Activated T-helper 2 cell treated with anti-CD3 and anti-CD28 coated beads, Interferon-gamma antibody, Interleukin-2, Interleukin-4, amounts not matched to agents 10 μg/mL and 5 μg/mL and 100 μg/mL, durations not matched to agents 14 hours and 24 hours and 36 hours (primary cell): ENCODE measurements at regions of chr16 and their contacts with region 1.

Region 1: DNA sequence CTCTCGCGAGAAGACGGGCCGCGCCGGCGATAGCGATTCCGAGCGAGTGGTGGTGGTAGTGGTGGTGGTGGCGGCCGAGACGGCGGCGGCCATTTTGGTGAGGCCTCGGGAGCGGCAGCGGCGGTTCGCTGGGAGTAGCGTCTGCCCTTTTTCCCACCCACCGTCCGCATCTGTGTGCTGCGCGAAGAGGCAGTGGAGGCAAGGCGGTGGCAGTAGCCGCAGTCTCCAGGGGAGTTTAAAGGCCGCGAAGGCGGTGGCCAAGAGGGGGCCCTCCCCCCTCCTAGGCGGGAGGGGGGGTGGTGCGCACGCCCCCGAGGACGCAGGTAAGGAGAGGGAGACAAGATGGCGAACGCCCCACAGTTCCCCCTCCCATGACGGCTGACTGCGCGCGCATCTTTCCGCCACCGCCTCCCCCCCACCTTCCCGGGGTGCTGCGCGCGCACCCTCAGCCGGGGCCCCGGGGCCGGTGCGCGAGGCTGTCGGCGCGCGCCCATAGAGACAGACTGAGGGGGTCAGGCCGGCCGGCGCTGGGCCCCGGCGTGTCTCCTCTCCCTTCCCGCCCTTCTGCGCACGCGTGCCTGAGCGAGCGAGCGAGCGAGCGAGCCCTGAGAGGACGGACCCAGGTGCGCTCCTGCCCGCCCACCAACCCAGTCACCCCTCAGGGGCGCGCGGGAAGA is 694 bp upstream of the SRCAP start:
- DNase-seq: peak; percentile 99
- H3K4me3 Mint-ChIP-seq: peak overlapping the region; percentile 100
- H3K27ac Mint-ChIP-seq: peak overlapping the region; percentile 100
- H3K4me1 Mint-ChIP-seq: peaks cover 29% of the 10 kb centered on the region
- H3K27me3 Mint-ChIP-seq: no peaks in the 10 kb centered on the region

Region 2: DNA sequence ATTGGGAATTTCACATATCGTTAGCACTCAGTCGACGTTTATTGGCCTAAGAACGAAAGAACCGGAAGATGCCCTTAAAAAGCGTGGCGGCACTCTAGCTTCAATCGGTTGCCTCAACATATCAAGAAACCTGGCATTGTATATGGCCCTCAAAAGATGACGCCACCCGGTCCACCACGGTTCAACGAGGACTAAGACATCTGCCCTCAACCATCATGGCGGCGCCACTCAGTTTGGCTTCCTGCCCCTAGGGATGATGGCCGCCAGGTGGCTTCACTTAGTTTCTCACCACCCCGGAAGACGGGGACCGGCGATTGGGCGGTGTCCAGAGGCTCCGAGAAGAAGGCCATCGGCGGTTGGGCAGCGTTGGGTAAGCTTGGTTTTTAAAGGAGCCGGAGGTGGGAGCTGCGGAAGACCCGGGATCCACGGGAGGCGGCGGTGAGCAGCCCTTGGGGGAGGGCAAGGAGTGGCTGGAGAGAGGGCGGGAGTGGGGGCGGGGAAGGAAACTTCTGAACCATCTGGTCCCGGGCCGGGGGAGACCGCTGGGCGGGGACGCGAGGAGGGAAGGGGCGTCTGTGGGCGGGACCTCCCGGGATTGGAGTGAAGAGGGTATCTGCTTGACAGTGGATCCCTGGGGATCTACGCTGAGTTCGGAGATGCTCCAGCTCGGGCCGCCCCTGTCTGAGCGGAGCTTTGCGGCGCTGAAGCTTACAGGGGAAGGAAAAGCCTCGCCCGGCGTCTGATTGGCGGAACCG is 47.7 kb before region 1 on chr16 and contains the start of gene PRR14:
- intact Hi-C with region 1: loop called (anchors 1 kb)
- DNase-seq: peak; percentile 99
- H3K4me3 Mint-ChIP-seq: peak within 1 kb of the TSS; percentile 98
- H3K27ac Mint-ChIP-seq: peak within 1 kb of the TSS; percentile 97
- H3K4me1 Mint-ChIP-seq: peaks cover 13% of the 10 kb centered on the region
- H3K27me3 Mint-ChIP-seq: no peaks in the 10 kb centered on the region
- total RNA-seq, gene PRR14: 84.0 and 90.5 TPM in 2 replicates

Region 3: GRCh38 chr16:30657866-30658730 is 40.2 kb before region 1 on chr16 and contains the start of gene FBRS:
- intact Hi-C with region 1: loop called (anchors 1 kb)
- DNase-seq: peak; percentile 100
- H3K4me3 Mint-ChIP-seq: peak within 1 kb of the TSS; percentile 89
- H3K27ac Mint-ChIP-seq: peak within 1 kb of the TSS; percentile 100
- H3K4me1 Mint-ChIP-seq: peaks cover 27% of the 10 kb centered on the region
- H3K27me3 Mint-ChIP-seq: no peaks in the 10 kb centered on the region
- total RNA-seq, gene FBRS: 107 TPM in 2 replicates

Region 4: DNA sequence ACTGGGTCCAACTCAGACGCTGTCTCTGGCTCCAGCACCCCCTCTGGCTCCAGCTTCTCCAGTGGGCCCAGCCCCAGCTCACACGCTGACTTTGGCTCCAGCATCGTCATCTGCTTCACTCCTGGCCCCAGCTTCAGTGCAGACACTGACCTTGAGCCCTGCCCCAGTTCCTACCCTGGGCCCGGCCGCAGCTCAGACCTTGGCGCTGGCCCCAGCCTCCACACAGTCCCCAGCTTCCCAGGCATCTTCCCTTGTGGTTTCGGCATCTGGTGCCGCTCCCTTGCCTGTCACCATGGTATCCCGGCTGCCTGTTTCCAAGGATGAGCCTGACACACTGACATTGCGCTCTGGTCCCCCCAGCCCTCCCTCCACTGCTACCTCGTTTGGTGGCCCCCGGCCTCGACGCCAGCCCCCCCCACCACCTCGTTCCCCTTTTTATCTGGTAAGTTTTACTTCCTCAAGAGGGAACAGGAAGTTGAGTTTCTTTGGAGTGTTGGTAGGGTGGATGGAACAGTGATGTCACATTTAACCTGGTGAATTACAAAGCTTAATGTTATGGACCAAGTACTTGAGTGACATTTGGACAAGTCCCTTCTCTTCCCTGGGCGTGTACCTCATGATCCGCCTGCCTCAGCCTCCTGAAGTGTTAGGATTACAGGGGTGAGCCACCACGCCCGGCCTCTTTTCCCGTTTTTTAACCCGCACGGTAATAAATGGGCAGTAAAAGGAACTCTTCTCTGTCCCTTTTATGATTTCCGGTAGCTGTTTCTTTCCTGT is 26.6 kb after region 1 on chr16:
- intact Hi-C with region 1: no loop called
- DNase-seq: no peak
- H3K4me3 Mint-ChIP-seq: no peak overlapping the region
- H3K27ac Mint-ChIP-seq: no peak overlapping the region
- H3K4me1 Mint-ChIP-seq: peaks cover 1% of the 10 kb centered on the region
- H3K27me3 Mint-ChIP-seq: no peaks in the 10 kb centered on the region

Region 5: DNA sequence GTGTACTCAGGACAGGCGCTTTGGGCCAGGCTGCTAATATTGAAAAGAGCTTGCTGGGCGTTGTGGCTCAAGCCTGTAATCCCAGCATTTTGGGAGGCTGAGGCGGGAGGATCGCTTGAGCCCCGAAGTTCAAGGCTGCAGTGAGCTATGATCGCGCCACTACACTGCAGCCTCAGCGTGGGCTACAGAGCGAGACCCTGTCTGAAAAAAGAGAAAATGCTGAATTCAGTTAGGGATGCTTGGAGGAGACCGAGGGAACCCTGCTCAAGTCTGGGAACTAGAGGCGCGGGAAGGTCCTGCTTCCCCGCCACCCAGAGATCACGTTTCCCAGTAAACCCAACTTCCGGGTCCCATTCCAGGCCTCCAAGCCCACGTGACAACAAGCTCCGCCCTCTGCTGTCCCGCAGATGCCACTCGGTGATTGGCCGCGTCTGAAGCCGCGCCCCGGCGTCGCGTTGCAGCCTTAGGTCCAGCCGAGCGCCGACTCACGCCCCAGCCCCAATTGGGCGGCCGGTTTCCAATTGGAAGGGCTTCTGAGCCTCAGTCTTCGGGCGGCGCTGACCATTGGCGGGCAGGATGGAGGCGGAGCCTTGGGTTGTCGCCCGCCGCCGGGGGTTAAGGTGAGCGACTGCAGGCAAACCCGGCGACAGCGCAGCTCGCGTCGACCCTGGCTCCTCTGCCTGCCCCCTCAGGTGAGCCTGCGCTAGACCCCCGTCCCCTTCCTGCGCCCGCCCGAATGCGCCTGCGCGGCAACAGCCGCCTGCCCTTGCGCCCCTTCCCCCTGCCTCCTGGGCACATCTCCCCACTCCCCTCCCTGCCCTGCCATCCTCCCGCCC is 49.7 kb after region 1 on chr16 and contains the start of gene PHKG2:
- intact Hi-C with region 1: loop called (anchors 1 kb)
- DNase-seq: peak; percentile 98
- H3K4me3 Mint-ChIP-seq: peak within 1 kb of the TSS; percentile 94
- H3K27ac Mint-ChIP-seq: peak within 1 kb of the TSS; percentile 78
- H3K4me1 Mint-ChIP-seq: peaks cover 18% of the 10 kb centered on the region
- H3K27me3 Mint-ChIP-seq: no peaks in the 10 kb centered on the region
- total RNA-seq, gene PHKG2: 38.1 and 41.6 TPM in 2 replicates

Region 6: GRCh38 chr16:30761928-30762810 is 63.9 kb after region 1 on chr16 and contains the starts of genes CFAP119 and RNF40:
- intact Hi-C with region 1: loop called (anchors 5 kb)
- DNase-seq: peak; percentile 95
- H3K4me3 Mint-ChIP-seq: peak within 1 kb of the TSS; percentile 85
- H3K27ac Mint-ChIP-seq: peak within 1 kb of the TSS; percentile 83
- H3K4me1 Mint-ChIP-seq: peaks cover 17% of the 10 kb centered on the region
- H3K27me3 Mint-ChIP-seq: no peaks in the 10 kb centered on the region
- total RNA-seq, gene CFAP119: 2.3 and 2.8 TPM in 2 replicates
- total RNA-seq, gene RNF40: 83.8 and 91.6 TPM in 2 replicates

Region 7: GRCh38 chr16:30874821-30875717 is 176.8 kb after region 1 on chr16:
- intact Hi-C with region 1: loop called (anchors 2 kb)
- DNase-seq: peak; percentile 83
- H3K4me3 Mint-ChIP-seq: peak overlapping the region; percentile 96
- H3K27ac Mint-ChIP-seq: peak overlapping the region; percentile 86
- H3K4me1 Mint-ChIP-seq: peaks cover 24% of the 10 kb centered on the region
- H3K27me3 Mint-ChIP-seq: no peaks in the 10 kb centered on the region

Region 8: DNA sequence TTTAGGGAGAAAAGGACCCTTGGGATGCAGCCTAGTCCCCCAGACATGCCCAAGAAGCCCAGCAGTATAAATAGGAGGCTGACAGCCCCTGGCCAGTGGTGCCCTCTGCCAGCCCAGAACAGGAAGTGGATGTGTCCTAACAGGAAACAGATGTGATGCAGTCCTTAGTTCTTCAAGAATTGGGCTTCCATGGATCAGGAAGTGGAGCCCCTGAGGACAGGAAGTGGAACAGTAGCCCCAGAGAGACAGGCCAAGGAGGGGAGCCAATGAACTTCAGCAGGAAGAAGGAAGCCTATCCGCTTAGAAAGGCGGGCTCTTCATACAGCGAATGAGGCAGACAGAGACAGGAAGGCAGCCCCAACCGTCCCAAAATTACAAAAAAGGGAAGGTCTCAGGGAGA is 205.3 kb after region 1 on chr16:
- intact Hi-C with region 1: no loop called
- DNase-seq: no peak
- H3K4me3 Mint-ChIP-seq: no peak overlapping the region
- H3K27ac Mint-ChIP-seq: peak overlapping the region; percentile 86
- H3K4me1 Mint-ChIP-seq: peaks cover 32% of the 10 kb centered on the region
- H3K27me3 Mint-ChIP-seq: peaks cover 2% of the 10 kb centered on the region

Region 9: DNA sequence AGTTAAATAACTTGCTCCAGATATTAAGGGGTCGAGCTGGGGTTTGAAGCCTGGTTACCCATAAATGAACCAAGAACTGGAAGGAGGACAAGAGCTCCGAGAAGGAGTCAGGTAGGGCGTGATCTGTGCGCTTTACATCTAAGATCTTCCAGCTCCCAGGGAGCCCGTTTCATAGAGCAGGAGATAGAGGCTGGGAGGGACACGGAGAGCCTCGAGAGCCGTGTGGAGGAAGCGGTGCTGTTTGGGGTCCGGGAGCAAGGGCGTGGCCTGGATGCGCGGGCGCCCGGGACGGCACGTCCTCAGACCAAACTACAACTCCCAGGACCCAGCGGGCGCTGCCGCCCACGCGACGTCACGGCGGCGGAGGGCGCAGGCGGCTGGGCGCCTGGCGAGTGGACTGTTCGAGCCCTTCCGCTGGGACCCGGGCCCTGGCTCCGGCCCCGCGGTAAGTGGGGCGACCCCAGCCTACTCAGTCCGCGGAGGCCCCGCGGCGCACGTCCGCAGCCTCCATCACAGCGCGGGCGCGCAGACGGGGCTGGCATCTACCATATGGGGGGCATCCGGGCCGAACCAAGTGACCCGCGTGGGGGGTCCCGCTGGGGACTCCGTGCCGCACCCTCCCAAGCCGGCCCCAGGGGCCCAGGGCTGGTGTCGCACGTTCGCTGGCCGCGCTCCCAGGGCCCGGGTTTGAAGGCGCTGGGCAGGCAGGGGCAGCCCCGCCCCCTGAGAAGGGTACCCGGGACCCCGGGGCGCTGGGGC is 409.9 kb after region 1 on chr16 and contains the start of gene BCKDK:
- intact Hi-C with region 1: loop called (anchors 10 kb)
- DNase-seq: peak; percentile 65
- H3K4me3 Mint-ChIP-seq: peak within 1 kb of the TSS; percentile 85
- H3K27ac Mint-ChIP-seq: peak within 1 kb of the TSS; percentile 91
- H3K4me1 Mint-ChIP-seq: peaks cover 18% of the 10 kb centered on the region
- H3K27me3 Mint-ChIP-seq: no peaks in the 10 kb centered on the region
- total RNA-seq, gene BCKDK: 47.5 and 50.0 TPM in 2 replicates